Activated T-helper 1 cell treated with anti-CD3 and anti-CD28 coated beads, Interleukin-12 subunit alpha, Interleukin-12 subunit beta, Interleukin-2, Interleukin-4 antibody, amounts not matched to agents 30 ng/mL and 10 ng/mL and 1 ng/mL, durations not matched to agents 14 hours and 24 hours and 36 hours (primary cell): ENCODE measurements at regions of chr14 and their contacts with region 1.

Region 1: DNA sequence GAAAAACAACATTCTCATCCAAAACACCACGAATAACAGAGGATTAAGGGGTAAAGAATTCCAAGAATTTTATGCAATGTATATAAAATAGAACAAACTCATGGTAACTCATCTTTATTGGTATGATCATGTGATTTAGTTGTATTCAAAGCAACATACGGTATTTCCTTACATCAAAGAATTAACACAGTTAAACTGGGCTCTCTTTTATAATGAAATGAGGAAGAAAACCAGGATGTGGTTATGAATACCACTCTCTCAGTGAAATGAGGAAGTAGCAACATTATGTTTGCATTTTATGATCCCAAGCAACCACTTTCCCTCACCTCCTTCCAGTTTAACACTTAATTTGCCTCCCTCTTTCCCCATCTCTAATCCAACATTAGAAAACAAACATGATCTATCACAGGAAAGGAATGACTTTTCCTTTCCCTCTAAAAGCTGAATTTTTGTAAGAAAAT is 22.9 kb downstream of the SPTLC2 start:
- DNase-seq: no peak
- H3K4me3 Mint-ChIP-seq: peak overlapping the region; percentile 66
- H3K27ac Mint-ChIP-seq: peak overlapping the region; percentile 85
- H3K4me1 Mint-ChIP-seq: peaks cover 57% of the 10 kb centered on the region
- H3K27me3 Mint-ChIP-seq: no peaks in the 10 kb centered on the region

Region 2: GRCh38 chr14:77607741-77608302 is 14.3 kb after region 1 on chr14:
- intact Hi-C with region 1: loop called (anchors 1 kb)
- DNase-seq: no peak
- H3K4me3 Mint-ChIP-seq: peak overlapping the region; percentile 78
- H3K27ac Mint-ChIP-seq: peak overlapping the region; percentile 89
- H3K4me1 Mint-ChIP-seq: peaks cover 60% of the 10 kb centered on the region
- H3K27me3 Mint-ChIP-seq: no peaks in the 10 kb centered on the region